ENCODE measurements at regions of chr11 and their contacts with region 1.

Region 1: GRCh38 chr11:104151404-104152204 is 12.3 kb downstream of the PDGFD start:
- DNase-seq: no peak
- H3K4me3 ChIP-seq: no peak overlapping the region
- H3K27ac ChIP-seq: no peak overlapping the region
- H3K4me1 ChIP-seq: peaks cover 0 to 11% (median 0%) of the 10 kb centered on the region in 4 donors
- H3K27me3 ChIP-seq: no peaks in the 10 kb centered on the region
- CTCF ChIP-seq: peak in 3 of 7 experiments; percentile 26 to 39 (median 39)
- EP300 ChIP-seq: no peak
- POLR2A ChIP-seq: no peak

Region 2: GRCh38 chr11:103682318-103683184 is 469.1 kb before region 1 on chr11:
- intact Hi-C with region 1: loop called (anchors 10 kb)
- DNase-seq: peak; percentile 46 to 91
- H3K4me3 ChIP-seq: no peak overlapping the region
- H3K27ac ChIP-seq: no peak overlapping the region
- H3K4me1 ChIP-seq: peaks cover 5 to 13% (median 11%) of the 10 kb centered on the region in 4 donors
- H3K27me3 ChIP-seq: no peaks in the 10 kb centered on the region
- CTCF ChIP-seq: peak in 5 of 7 experiments; percentile 64 to 96 (median 74)
- EP300 ChIP-seq: no peak
- POLR2A ChIP-seq: no peak

Measured in stomach (tissue), 19 donors.